CD4-positive, alpha-beta memory T cell (primary cell): ENCODE measurements at regions of chr5 and their contacts with region 1.

Region 1: DNA sequence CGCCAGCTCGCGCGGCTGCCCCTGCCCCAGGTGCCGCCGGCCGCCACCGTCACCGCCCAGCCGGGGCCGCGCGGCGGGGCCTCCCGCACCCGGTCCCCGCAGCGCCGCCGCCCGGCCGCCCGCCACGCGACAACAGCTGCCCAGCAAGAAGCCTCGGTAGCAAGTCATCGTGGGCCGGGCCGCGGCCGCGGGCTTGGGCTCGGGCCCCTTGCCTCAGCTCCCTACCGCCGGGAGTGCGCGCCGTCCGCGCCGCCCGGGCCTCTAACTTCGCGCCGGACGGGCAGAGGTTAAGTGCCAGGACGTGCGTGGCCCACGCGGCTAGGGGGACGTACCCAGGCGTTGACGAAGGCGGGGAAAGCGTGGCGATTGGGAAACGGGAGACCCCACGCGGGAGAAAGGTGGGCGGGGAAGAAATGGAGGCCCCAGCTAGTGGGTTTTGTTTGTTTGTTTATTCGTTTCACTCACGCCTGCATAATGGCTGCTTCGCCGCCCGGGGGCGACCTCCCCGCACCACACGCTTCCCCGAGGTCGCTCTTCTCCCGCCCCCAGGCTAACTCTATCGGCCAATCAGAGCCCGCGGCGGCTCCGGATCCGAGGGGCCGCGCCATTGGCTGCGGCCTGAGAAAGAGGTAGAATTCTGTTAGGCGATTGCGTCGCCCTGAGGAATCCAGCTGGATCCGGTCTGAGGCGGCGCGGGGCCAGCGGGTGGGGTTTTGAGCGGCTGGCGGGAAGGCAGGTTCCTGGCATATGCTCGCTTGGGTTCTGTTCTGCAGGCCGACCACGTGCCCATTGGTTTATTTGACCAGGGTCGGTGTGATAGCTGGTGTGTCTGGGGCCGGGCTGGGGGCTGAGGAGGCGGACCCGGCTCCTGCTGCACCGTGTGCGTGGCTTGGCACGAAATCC is at the start of gene NADK2:
- DNase-seq: peak; percentile 95 to 97 (median 96)
- H3K4me3 ChIP-seq: peak within 1 kb of the TSS; percentile 59 to 67
- H3K4me3 Mint-ChIP-seq: peak within 1 kb of the TSS; percentile 87 to 95 (median 92)
- H3K27ac ChIP-seq: peak within 1 kb of the TSS; percentile 83
- H3K27ac Mint-ChIP-seq: peak within 1 kb of the TSS; percentile 89 to 98 (median 96)
- H3K4me1 ChIP-seq: peaks cover 22% of the 10 kb centered on the region
- H3K4me1 Mint-ChIP-seq: peaks cover 35 to 57% (median 45%) of the 10 kb centered on the region in 4 donors
- H3K27me3 ChIP-seq: no peaks in the 10 kb centered on the region
- H3K27me3 Mint-ChIP-seq: no peaks in the 10 kb centered on the region
- total RNA-seq, gene NADK2: 14.1 to 14.5 TPM

Region 2: DNA sequence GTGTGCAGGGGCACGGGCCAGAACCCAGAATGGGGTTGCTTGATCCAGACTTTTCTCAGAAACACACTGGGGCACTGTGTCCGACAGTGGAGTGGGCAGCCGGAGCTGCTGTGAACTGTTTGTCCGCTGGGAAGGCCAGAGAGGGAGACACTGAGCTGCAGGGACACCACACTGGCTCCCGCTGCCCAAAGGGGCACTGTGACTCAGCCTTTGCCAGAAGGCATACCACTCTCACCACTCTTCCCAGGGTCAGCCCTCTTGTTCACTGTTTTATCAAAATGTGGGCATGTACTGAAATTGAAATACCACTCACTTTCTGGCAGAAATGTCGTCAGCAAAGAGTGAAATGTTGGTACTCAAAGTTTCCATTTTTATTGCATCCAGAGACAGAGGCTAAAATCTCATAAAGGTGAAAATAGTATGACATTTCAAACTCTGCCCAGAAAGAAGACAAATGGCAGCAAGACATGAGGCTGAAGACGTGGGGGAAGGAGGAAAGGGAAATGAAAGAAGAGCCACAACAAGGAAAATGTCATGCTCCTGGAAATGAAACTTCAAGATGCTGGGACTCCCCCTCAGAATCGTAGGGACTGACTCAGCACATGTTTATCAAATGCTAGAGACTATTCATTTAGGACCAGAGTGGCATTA is 389.7 kb before region 1 on chr5:
- CTCF ChIA-PET with region 1: no interaction called
- POLR2A ChIA-PET with region 1: no interaction called
- intact Hi-C with region 1: loop called (anchors 10 kb)
- DNase-seq: peak; percentile 60 to 81 (median 62)
- H3K4me3 ChIP-seq: peak overlapping the region; percentile 54 to 71
- H3K4me3 Mint-ChIP-seq: peak overlapping the region; percentile 87 to 99 (median 95)
- H3K27ac ChIP-seq: peak overlapping the region; percentile 97
- H3K27ac Mint-ChIP-seq: peak overlapping the region; percentile 94 to 100 (median 100)
- H3K4me1 ChIP-seq: peaks cover 75% of the 10 kb centered on the region
- H3K4me1 Mint-ChIP-seq: peaks cover 52 to 85% (median 70%) of the 10 kb centered on the region in 4 donors
- H3K27me3 ChIP-seq: no peaks in the 10 kb centered on the region
- H3K27me3 Mint-ChIP-seq: no peaks in the 10 kb centered on the region

Region 3: DNA sequence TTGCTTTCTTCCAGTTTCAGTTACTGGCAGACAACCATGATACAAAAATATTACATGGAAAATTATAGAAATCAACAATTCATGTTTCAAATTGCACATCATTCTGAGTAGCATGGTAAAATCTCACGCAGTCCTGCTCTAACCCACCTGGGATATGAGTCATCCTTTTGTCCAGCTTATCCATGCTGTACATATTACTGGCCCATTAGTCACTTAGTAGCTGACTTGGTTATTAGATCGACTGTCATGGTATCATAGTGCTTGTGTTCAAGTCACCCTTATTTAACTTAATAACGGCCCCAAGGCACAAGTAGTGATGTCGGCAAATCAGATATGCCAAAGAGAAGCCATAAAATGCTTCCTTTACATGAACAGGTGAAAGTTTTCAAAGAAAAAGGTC is 41.4 kb before region 1 on chr5:
- CTCF ChIA-PET with region 1: no interaction called
- POLR2A ChIA-PET with region 1: no interaction called
- intact Hi-C with region 1: no loop called
- DNase-seq: no peak
- H3K4me3 ChIP-seq: no peak overlapping the region
- H3K4me3 Mint-ChIP-seq: no peak overlapping the region
- H3K27ac ChIP-seq: no peak overlapping the region
- H3K27ac Mint-ChIP-seq: no peak overlapping the region
- H3K4me1 ChIP-seq: no peaks in the 10 kb centered on the region
- H3K4me1 Mint-ChIP-seq: no peaks in the 10 kb centered on the region
- H3K27me3 ChIP-seq: no peaks in the 10 kb centered on the region
- H3K27me3 Mint-ChIP-seq: no peaks in the 10 kb centered on the region

Region 4: GRCh38 chr5:36230151-36230793 is 11.6 kb before region 1 on chr5:
- CTCF ChIA-PET with region 1: interaction called, 15 read pairs
- POLR2A ChIA-PET with region 1: interaction called, 8 read pairs
- intact Hi-C with region 1: no loop called
- DNase-seq: no peak
- H3K4me3 ChIP-seq: no peak overlapping the region
- H3K4me3 Mint-ChIP-seq: no peak overlapping the region
- H3K27ac ChIP-seq: no peak overlapping the region
- H3K27ac Mint-ChIP-seq: peak overlapping the region in 1 of 7 donors; percentile 4
- H3K4me1 ChIP-seq: no peaks in the 10 kb centered on the region
- H3K4me1 Mint-ChIP-seq: peaks cover 0 to 16% (median 6%) of the 10 kb centered on the region in 4 donors
- H3K27me3 ChIP-seq: no peaks in the 10 kb centered on the region
- H3K27me3 Mint-ChIP-seq: no peaks in the 10 kb centered on the region

Region 5: DNA sequence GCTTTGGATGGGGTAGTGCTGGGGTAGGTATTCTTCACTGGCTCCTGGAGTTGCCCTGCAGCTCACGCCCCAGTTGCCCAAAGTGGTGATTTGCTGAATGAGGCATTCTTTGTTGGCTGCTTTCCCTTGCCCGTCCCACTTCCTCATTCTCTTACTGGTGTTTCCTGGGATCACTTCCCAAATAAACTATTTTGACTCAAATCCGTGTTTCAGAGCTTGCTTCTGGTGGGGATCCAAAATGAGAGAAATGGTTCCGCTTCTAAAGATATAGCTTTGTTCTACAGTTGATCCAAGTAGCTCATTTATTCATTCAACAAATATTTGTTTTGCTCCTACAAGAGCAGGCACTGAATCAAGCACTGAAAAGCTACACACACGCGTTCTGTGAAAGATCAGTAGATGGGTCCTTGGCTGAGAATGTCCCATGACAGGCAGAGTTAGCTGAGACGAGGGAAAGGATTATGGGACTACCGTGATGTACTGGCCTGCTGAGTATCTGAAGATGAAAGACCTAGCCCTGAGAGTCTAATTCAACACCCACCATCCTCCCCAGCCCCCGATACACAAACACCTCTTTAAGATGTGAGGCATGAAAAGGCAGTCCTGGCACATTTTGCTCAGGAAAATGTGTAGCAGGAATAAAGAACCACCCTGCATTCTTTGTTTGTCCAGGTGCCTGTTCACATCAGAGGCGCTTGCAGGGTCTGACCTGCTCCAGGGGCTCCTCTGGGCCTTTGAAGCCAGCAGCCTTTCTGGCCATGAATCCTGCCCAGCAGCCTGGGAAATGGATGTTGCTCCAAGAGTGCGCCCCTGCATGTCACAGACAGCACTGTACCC is 202.9 kb after region 1 on chr5:
- CTCF ChIA-PET with region 1: no interaction called
- POLR2A ChIA-PET with region 1: no interaction called
- intact Hi-C with region 1: no loop called
- DNase-seq: no peak
- H3K4me3 ChIP-seq: no peak overlapping the region
- H3K4me3 Mint-ChIP-seq: no peak overlapping the region
- H3K27ac ChIP-seq: no peak overlapping the region
- H3K27ac Mint-ChIP-seq: no peak overlapping the region
- H3K4me1 ChIP-seq: no peaks in the 10 kb centered on the region
- H3K4me1 Mint-ChIP-seq: no peaks in the 10 kb centered on the region
- H3K27me3 ChIP-seq: no peaks in the 10 kb centered on the region
- H3K27me3 Mint-ChIP-seq: peaks cover 2 to 5% of the 10 kb centered on the region in 2 donors

Region 6: DNA sequence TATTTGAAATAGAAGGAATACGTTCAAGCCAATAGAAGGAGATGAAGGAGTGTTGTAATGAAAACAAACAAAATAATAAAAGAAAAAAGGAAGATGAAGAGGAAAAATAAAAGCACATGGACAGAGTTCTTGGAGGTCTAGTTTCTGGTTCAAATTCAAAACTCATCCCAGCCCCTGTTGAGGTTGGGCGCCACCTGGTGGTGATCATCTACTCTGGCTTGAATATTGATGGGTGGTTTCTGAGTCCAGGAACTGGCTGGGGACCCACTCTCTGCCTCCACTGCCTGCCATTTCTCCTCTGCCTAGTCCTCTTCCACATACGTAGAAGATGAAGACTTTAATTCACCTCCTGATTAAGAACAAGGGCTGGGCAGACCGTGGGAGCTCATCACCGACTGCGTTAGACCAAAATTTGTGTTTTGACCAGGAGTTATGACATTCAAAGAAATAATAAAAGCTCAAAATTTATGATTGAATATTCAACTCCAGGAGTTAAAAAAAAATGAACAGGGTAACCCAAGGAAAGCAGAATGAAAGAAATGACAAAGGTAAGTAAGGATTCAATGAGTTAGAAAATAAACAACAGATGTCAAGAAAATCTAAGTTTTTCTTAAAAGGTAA is 265.6 kb after region 1 on chr5:
- CTCF ChIA-PET with region 1: interaction called, 7 read pairs
- POLR2A ChIA-PET with region 1: no interaction called
- intact Hi-C with region 1: loop called (anchors 1 kb)
- DNase-seq: peak; percentile 42 to 56 (median 50)
- H3K4me3 ChIP-seq: no peak overlapping the region
- H3K4me3 Mint-ChIP-seq: no peak overlapping the region
- H3K27ac ChIP-seq: no peak overlapping the region
- H3K27ac Mint-ChIP-seq: no peak overlapping the region
- H3K4me1 ChIP-seq: no peaks in the 10 kb centered on the region
- H3K4me1 Mint-ChIP-seq: no peaks in the 10 kb centered on the region
- H3K27me3 ChIP-seq: no peaks in the 10 kb centered on the region
- H3K27me3 Mint-ChIP-seq: peaks cover 7 to 10% of the 10 kb centered on the region in 2 donors

Region 7: DNA sequence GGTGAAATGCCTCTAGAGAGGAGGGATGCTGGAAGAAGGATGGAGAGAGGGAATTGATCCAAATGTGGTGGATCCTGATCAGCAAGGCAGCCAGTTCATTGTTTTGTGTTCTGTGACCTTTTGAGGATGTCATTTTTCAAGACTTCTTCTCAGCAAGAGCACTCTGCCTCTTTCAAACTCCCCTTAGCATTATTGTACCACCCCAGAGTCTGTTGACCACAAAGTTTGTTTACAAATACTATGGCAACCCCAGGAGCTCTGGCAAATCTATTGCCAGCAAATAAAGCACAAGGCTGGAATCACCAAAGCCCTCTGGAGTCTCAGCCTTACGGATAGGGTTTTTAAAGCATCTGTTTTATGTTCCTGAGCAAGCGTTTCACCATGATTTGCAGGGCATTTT is 288.3 kb after region 1 on chr5:
- CTCF ChIA-PET with region 1: no interaction called
- POLR2A ChIA-PET with region 1: no interaction called
- intact Hi-C with region 1: no loop called
- DNase-seq: no peak
- H3K4me3 ChIP-seq: no peak overlapping the region
- H3K4me3 Mint-ChIP-seq: no peak overlapping the region
- H3K27ac ChIP-seq: no peak overlapping the region
- H3K27ac Mint-ChIP-seq: no peak overlapping the region
- H3K4me1 ChIP-seq: no peaks in the 10 kb centered on the region
- H3K4me1 Mint-ChIP-seq: no peaks in the 10 kb centered on the region
- H3K27me3 ChIP-seq: no peaks in the 10 kb centered on the region
- H3K27me3 Mint-ChIP-seq: peaks cover 8 to 18% of the 10 kb centered on the region in 2 donors

Region 8: GRCh38 chr5:37034955-37035354 is 793.1 kb after region 1 on chr5:
- CTCF ChIA-PET with region 1: no interaction called
- POLR2A ChIA-PET with region 1: no interaction called
- intact Hi-C with region 1: no loop called
- DNase-seq: no peak
- H3K4me3 ChIP-seq: no peak overlapping the region
- H3K4me3 Mint-ChIP-seq: no peak overlapping the region
- H3K27ac ChIP-seq: no peak overlapping the region
- H3K27ac Mint-ChIP-seq: peak overlapping the region in 1 of 7 donors; percentile 7
- H3K4me1 ChIP-seq: no peaks in the 10 kb centered on the region
- H3K4me1 Mint-ChIP-seq: peaks cover 0 to 2% (median under 1%) of the 10 kb centered on the region in 4 donors
- H3K27me3 ChIP-seq: no peaks in the 10 kb centered on the region
- H3K27me3 Mint-ChIP-seq: no peaks in the 10 kb centered on the region

Region 9: GRCh38 chr5:37370864-37371726 is 1129.2 kb after region 1 on chr5 and contains the start of gene NUP155:
- CTCF ChIA-PET with region 1: no interaction called
- POLR2A ChIA-PET with region 1: interaction called, 3 read pairs
- intact Hi-C with region 1: loop called (anchors 5 kb)
- DNase-seq: peak; percentile 84 to 95 (median 88)
- H3K4me3 ChIP-seq: peak within 1 kb of the TSS; percentile 80 to 94
- H3K4me3 Mint-ChIP-seq: peak within 1 kb of the TSS; percentile 93 to 98 (median 96)
- H3K27ac ChIP-seq: peak within 1 kb of the TSS; percentile 80
- H3K27ac Mint-ChIP-seq: peak within 1 kb of the TSS; percentile 87 to 99 (median 97)
- H3K4me1 ChIP-seq: peaks cover 40% of the 10 kb centered on the region
- H3K4me1 Mint-ChIP-seq: peaks cover 16 to 42% (median 26%) of the 10 kb centered on the region in 4 donors
- H3K27me3 ChIP-seq: no peaks in the 10 kb centered on the region
- H3K27me3 Mint-ChIP-seq: no peaks in the 10 kb centered on the region
- total RNA-seq, gene NUP155: 30.0 to 30.8 TPM